T-cell (primary cell): ENCODE measurements at regions of chr1 and their contacts with region 1.

Region 1: GRCh38 chr1:147717063-147717565 is 43.3 kb downstream of the GJA5 start:
- DNase-seq: peak in 8 of 35 experiments; percentile 4 to 16 (median 10)
- ATAC-seq: peak in 3 of 4 experiments; percentile 54 to 90 (median 63)
- H3K4me3 ChIP-seq: no peak overlapping the region
- H3K4me3 Mint-ChIP-seq: peak overlapping the region in 2 of 3 donors; percentile 24 to 49
- H3K27ac ChIP-seq: peak overlapping the region; percentile 56
- H3K27ac Mint-ChIP-seq: peak overlapping the region; percentile 85 to 94
- H3K4me1 ChIP-seq: peaks cover 0 to 6% of the 10 kb centered on the region in 2 experiments
- H3K4me1 Mint-ChIP-seq: peaks cover 10 to 17% (median 14%) of the 10 kb centered on the region in 3 donors
- H3K27me3 ChIP-seq: peaks cover 0 to 3% of the 10 kb centered on the region in 2 experiments
- H3K27me3 Mint-ChIP-seq: peaks cover 27 to 46% of the 10 kb centered on the region in 2 donors

Region 2: DNA sequence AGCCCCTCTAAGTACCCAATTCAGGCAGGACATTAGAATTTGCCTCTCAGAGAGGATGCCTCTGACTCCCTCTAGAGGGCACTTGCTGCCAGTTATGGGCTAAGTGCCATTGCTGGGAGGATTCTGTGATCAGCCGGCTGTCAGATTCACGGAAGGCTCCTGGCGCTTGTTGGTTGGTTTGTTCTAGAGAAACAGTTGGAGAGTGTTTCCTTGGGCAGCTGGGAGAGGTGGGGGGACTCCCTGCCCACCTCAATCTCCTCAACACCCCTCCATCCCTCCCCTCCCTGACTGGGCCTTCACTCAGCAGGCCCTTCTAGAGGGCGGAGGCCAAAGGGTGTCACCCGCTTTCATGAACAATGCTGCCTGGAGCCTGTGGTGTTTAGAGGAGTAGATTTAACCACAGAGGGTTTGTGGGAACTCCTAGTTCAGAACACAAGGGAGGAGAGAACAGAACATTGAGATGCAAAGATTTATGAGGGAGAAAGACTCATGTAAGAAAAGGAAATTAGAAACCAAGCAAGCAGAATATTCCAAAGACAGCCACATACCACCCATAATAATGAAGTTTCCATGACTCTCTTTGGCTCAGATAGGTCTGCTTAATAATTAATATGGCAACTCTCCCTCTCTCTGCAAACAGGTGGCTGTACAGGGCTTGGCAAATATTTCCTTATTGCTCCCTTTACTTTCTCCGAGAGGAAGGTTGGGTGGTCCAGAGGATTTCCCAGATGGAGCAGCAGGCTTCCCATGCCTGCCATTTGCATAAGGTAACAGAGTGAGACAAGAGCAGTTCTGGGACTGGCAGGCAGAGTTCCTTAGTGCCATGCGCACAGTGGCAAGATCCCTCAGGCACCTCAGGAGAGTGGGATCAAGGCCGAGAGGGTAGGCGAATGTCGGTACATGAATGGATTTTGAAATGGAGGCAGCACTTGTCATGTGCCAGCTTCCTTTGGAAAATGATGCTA is 16.8 kb before region 1 on chr1:
- CTCF ChIA-PET with region 1: interaction called, 3 to 16 read pairs
- POLR2A ChIA-PET with region 1: no interaction called
- DNase-seq: peak; percentile 14 to 76 (median 49)
- ATAC-seq: peak; percentile 86 to 94 (median 93)
- H3K4me3 ChIP-seq: peak overlapping the region in 1 of 2 donors; percentile 19
- H3K4me3 Mint-ChIP-seq: peak overlapping the region; percentile 36 to 61 (median 48)
- H3K27ac ChIP-seq: peak overlapping the region; percentile 25
- H3K27ac Mint-ChIP-seq: peak overlapping the region; percentile 83
- H3K4me1 ChIP-seq: peaks cover 0 to 7% of the 10 kb centered on the region in 2 experiments
- H3K4me1 Mint-ChIP-seq: peaks cover 9 to 13% (median 12%) of the 10 kb centered on the region in 3 donors
- H3K27me3 ChIP-seq: no peaks in the 10 kb centered on the region
- H3K27me3 Mint-ChIP-seq: peaks cover 8 to 10% of the 10 kb centered on the region in 2 donors